ENCODE measurements at regions of chr7 and their contacts with region 1.

Region 1: DNA sequence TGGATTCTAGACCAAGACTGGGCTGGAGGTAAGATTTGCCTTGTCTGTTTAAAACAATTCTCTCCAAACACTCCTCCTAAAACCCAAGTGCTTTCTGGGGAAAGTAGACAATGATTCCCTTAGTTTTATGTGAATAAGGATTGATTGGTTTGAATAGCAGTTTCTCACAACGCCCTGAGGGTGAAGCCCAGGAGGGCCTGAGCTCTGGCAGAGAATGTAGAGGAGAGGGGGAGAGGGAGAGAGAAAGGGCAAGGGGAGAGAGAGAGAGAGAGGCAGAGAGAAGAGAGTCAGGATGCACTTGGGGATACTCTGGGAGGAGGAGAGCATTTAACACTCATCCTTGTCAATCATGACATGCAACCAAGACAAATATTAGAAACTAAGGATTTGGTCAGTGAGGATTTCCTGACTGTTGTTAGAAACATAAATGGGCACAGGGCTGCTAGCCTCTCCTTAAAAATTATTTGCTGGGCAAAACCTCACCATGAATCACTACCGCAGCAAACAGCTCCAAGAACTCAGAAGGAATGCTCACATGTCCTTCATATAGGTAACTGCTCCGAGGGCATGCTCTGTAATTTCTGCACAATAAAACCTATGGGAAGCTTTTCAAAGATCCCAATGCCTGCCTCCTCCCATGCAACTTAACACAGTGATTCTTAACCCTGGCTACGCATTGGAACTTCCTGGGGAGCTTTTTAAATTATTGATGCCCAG is 55.2 kb upstream of the RAPGEF5 start:
- DNase-seq: peak; percentile 90
- ATAC-seq: peak; percentile 98
- H3K4me3 ChIP-seq: no peak overlapping the region; the same call in 1 of the 2 replicates
- H3K27ac ChIP-seq: peak overlapping the region; percentile 79
- H3K4me1 ChIP-seq: peaks cover 20% of the 10 kb centered on the region
- H3K27me3 ChIP-seq: no peaks in the 10 kb centered on the region
- CTCF ChIP-seq: no peak

Region 2: DNA sequence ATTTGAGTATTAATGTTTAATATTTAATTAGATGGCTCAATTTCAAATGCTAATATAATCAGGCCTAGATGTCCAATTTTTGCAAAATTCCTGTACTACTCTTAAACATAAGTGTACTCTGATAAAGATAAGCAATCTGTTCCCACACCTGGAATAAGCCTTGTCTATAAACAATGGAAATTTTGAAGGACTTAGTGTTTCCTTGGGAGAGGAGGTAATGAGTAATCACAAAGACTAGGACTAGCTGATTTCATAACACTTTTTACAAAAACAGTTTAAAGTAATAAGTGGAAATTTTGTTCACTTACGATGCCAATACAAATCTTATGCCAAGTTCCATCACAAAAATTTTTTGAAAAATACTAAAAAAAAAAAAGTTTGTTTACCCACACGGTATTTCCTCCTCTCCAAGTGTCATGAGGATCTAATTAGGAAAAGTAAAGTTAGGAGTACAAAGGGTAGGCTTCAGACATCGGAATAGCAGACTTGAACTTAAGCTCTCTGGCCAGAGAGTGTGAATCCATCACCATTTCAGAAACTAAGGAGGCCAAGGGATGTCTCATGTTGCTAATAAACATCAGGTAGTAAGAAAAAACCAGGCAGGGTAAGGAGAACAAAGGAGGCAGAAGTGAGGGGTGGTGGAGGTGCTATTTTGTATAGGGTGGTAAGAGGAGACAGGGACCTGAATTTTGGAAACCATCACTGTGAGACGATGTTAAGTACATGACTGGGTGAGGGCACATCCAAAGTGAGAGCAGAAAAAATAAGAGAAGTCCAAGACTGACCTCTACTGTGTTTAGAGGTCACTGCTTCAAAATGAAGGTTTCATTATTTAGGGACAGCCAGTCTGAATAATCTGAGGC is 116.5 kb before region 1 on chr7:
- CTCF ChIA-PET with region 1: no interaction called
- POLR2A ChIA-PET with region 1: no interaction called
- intact Hi-C with region 1: loop called (anchors 1 kb)
- DNase-seq: no peak
- ATAC-seq: no peak
- H3K4me3 ChIP-seq: no peak overlapping the region
- H3K27ac ChIP-seq: no peak overlapping the region
- H3K4me1 ChIP-seq: no peaks in the 10 kb centered on the region
- H3K27me3 ChIP-seq: no peaks in the 10 kb centered on the region
- CTCF ChIP-seq: no peak

Region 3: GRCh38 chr7:22445140-22445743 is 33.1 kb after region 1 on chr7:
- CTCF ChIA-PET with region 1: no interaction called
- POLR2A ChIA-PET with region 1: no interaction called
- intact Hi-C with region 1: loop called (anchors 1 kb)
- DNase-seq: no peak
- ATAC-seq: no peak
- H3K4me3 ChIP-seq: no peak overlapping the region
- H3K27ac ChIP-seq: peak overlapping the region; percentile 91
- H3K4me1 ChIP-seq: peaks cover 40% of the 10 kb centered on the region
- H3K27me3 ChIP-seq: no peaks in the 10 kb centered on the region
- CTCF ChIP-seq: no peak